ENCODE measurements at regions of chr1 and their contacts with region 1.

Region 1: GRCh38 chr1:92843429-92844352 is 11.9 kb downstream of the RPL5 start:
- DNase-seq: no peak
- ATAC-seq: no peak
- H3K4me3 Mint-ChIP-seq: no peak overlapping the region
- H3K27ac Mint-ChIP-seq: no peak overlapping the region
- H3K4me1 Mint-ChIP-seq: peaks cover 21% of the 10 kb centered on the region
- H3K27me3 Mint-ChIP-seq: no peaks in the 10 kb centered on the region
- CTCF ChIP-seq: no peak

Region 2: GRCh38 chr1:92701147-92701546 is 142.5 kb before region 1 on chr1:
- CTCF ChIA-PET with region 1: no interaction called
- POLR2A ChIA-PET with region 1: no interaction called
- intact Hi-C with region 1: no loop called
- DNase-seq: no peak
- ATAC-seq: no peak
- H3K4me3 Mint-ChIP-seq: no peak overlapping the region
- H3K27ac Mint-ChIP-seq: no peak overlapping the region
- H3K4me1 Mint-ChIP-seq: no peaks in the 10 kb centered on the region
- H3K27me3 Mint-ChIP-seq: peaks cover 2% of the 10 kb centered on the region
- CTCF ChIP-seq: no peak

Region 3: DNA sequence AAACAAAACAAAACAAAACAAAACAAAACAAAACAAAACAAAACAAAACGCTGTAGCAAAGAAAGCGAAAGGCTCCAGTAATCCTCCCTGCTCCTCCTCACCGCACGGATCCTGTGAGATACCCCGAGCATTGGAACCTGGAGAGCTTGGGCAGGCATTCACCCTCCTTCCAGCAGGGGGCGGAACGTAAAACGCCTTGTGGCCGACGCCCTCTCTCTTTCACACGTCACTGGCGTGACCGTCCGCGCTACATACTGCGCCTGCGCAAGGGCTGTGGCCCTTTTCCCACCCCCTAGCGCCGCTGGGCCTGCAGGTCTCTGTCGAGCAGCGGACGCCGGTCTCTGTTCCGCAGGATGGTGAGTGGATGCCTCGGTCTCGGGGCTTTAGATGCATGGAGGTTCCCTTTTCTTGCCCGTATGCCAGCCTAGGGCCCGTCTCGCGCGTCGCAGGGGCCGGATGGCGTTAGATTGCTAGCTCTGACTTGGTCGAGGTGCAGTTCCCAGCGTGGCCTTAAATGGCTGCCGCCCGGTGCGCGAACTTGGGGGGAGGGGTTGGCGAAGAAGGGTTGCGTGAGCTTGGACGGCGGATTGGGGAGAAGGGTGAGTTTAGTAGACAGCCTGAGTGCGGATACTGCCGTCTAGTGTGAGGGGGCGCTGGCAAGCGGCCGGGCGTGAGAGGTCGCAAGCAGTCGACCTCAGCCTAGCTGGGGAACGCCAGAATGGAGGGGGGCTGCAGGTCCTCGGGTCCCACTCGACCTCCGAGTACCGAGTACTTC is 11.7 kb before region 1 on chr1 and contains the start of gene RPL5:
- CTCF ChIA-PET with region 1: interaction called, 25 read pairs
- POLR2A ChIA-PET with region 1: interaction called, 30 read pairs
- intact Hi-C with region 1: no loop called
- DNase-seq: peak; percentile 98
- ATAC-seq: peak; percentile 93
- H3K4me3 Mint-ChIP-seq: peak within 1 kb of the TSS; percentile 99
- H3K27ac Mint-ChIP-seq: peak within 1 kb of the TSS; percentile 99
- H3K4me1 Mint-ChIP-seq: peaks cover 28% of the 10 kb centered on the region
- H3K27me3 Mint-ChIP-seq: no peaks in the 10 kb centered on the region
- CTCF ChIP-seq: peak; percentile 95
- total RNA-seq, gene RPL5: 1,782 to 1,792 TPM